ENCODE measurements at regions of chr16 and their contacts with region 1.

Region 1: GRCh38 chr16:28491970-28492474 is at the start of gene CLN3:
- DNase-seq: peak; percentile 94
- ATAC-seq: peak; percentile 98
- total RNA-seq, gene CLN3: 14.8 TPM

Region 2: GRCh38 chr16:28553776-28554633 is 62.0 kb after region 1 on chr16 and contains the start of gene SGF29:
- intact Hi-C with region 1: loop called (anchors 10 kb)
- DNase-seq: peak; percentile 94
- ATAC-seq: peak; percentile 96
- total RNA-seq, gene SGF29: 20.2 TPM

Region 3: GRCh38 chr16:28617874-28618273 is 125.9 kb after region 1 on chr16:
- intact Hi-C with region 1: loop called (anchors 5 kb)
- DNase-seq: no peak
- ATAC-seq: no peak

Measured in Right ventricle myocardium inferior (tissue), 1 donor.